Lower leg skin (tissue), 4 donors: ENCODE measurements at regions of chr11 and their contacts with region 1.

Region 1: GRCh38 chr11:78949976-78950690 is 375.5 kb upstream of the NARS2 start:
- DNase-seq: peak in 1 of 2 donors; percentile 72
- H3K4me3 ChIP-seq: no peak overlapping the region
- CTCF ChIP-seq: no peak
- POLR2A ChIP-seq: no peak

Region 2: DNA sequence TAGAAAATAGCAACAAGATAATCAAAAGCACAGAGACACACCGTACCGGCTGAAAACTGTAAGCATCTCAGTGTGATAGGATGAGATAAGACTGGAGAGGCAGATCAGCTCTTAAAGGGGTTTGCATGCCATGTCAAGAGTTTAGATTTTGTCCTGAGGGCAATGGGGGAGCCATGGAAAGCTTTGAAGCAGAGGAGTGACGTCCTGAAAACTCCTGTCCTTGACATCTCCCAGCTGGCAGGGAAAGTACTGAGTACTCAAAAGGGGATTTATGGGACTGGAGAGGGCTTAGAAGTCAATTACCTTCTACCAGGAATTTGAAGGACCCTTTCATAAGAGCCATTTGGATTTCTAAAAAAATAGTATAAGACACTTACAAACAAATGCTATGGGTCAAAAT is 45.0 kb after region 1 on chr11:
- intact Hi-C with region 1: loop called (anchors 2 kb)
- DNase-seq: no peak
- H3K4me3 ChIP-seq: no peak overlapping the region
- CTCF ChIP-seq: no peak
- POLR2A ChIP-seq: no peak

Region 3: DNA sequence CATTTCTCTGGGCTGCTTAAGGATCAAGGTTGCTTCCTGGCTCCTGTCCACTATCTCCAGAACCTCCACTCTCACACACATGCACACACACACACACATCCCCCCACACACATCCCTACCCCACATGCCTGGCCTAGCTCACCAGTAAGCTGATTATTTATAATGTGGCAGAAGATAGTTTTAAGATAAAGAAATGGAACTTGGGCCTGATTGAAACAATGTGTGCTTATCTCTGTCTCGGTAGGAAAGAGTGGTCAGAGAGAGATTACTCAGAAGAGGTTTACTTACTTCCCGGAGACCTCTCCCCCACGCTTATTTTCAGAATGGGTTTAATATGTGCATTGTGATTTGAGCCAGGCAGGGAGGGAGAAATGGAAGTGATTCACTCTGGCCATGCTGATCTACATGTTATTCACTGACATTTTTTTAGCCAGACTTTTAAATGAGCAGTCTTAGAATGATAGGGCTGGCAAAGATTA is 68.3 kb after region 1 on chr11:
- intact Hi-C with region 1: no loop called
- DNase-seq: no peak
- H3K4me3 ChIP-seq: no peak overlapping the region
- CTCF ChIP-seq: no peak
- POLR2A ChIP-seq: no peak